ENCODE measurements at regions of chr2 and their contacts with region 1.

Region 1: DNA sequence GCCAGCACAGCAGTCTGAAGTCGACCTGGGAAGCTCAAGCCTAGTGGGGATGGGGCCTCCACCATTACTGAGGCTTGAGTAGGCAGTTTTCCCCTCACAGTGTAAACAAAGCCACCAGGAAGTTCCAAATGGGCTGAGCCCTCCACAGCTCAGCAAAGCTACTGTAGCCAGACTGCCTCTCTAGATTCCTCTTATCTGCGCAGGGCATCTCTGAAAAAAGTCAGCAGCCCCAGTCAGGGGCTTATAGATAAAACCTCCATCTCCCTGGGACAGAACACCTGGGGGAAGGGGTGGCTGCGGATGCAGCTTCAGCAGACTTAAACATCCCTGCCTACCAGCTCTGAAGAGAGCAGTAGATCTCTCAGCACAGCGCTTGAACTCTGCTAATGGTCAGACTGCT is 218.4 kb upstream of the VRK2 start:
- DNase-seq: no peak
- ATAC-seq: no peak
- H3K4me3 ChIP-seq: no peak overlapping the region
- H3K27ac ChIP-seq: no peak overlapping the region
- H3K4me1 ChIP-seq: no peaks in the 10 kb centered on the region
- H3K27me3 ChIP-seq: no peaks in the 10 kb centered on the region
- CTCF ChIP-seq: no peak
- POLR2A ChIP-seq: no peak
- RAD21 ChIP-seq: no peak

Region 2: DNA sequence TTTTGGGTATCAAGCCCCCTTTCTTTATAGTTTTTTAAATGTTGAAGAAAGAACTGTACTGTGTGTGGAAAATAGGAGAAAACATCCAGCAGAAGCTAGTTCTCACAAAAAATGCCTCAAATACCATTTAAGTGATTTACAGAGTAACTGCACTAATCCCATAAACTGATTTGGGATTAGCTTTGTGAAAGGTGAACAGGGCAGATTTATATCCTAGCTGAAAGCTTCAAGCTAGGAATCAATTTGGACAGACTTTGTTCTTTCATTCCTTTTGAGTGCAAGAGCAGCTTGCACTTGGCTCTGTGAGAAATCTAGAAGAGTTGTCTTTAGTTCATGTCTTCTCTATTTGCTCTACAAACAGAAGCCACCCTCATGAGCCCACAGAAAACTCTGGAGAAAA is 34.5 kb after region 1 on chr2:
- CTCF ChIA-PET with region 1: no interaction called
- POLR2A ChIA-PET with region 1: no interaction called
- dilution Hi-C with region 1: no loop called
- in situ Hi-C with region 1: no loop called
- intact Hi-C with region 1: loop called (anchors 1 kb)
- DNase-seq: no peak
- ATAC-seq: no peak
- H3K4me3 ChIP-seq: no peak overlapping the region
- H3K27ac ChIP-seq: no peak overlapping the region
- H3K4me1 ChIP-seq: no peaks in the 10 kb centered on the region
- H3K27me3 ChIP-seq: no peaks in the 10 kb centered on the region
- CTCF ChIP-seq: no peak
- POLR2A ChIP-seq: no peak
- RAD21 ChIP-seq: no peak